ENCODE measurements at regions of chrX and their contacts with region 1.

Region 1: DNA sequence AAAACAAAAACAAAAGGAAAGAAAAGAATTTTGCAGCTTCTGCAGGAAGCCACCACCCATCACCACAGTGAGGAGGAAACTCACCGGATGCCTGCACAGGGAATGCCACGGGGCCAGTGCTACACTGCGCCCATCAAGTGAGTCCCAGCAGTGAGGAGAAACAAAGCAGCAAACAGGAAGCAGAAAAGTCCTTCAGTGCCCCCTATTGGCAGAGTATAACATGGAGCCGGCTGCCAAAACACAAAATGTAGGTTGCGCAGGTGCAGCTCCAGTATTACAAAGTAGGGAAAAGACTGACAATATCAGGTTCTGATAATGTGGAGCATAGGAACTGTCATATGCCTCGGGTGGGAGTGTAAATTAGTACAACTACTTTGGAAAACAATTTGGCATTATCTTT is 23.3 kb upstream of the SCML2 start:
- DNase-seq: peak; percentile 47
- H3K4me3 ChIP-seq: no peak overlapping the region
- H3K27ac ChIP-seq: no peak overlapping the region
- H3K4me1 ChIP-seq: no peaks in the 10 kb centered on the region
- CTCF ChIP-seq: peak; percentile 72

Region 2: GRCh38 chrX:17788439-17788838 is 589.4 kb before region 1 on chrX:
- CTCF ChIA-PET with region 1: no interaction called
- POLR2A ChIA-PET with region 1: no interaction called
- intact Hi-C with region 1: loop called (anchors 5 kb)
- DNase-seq: peak; percentile 14
- H3K4me3 ChIP-seq: no peak overlapping the region
- H3K27ac ChIP-seq: no peak overlapping the region
- H3K4me1 ChIP-seq: no peaks in the 10 kb centered on the region
- CTCF ChIP-seq: peak; percentile 80

Region 3: DNA sequence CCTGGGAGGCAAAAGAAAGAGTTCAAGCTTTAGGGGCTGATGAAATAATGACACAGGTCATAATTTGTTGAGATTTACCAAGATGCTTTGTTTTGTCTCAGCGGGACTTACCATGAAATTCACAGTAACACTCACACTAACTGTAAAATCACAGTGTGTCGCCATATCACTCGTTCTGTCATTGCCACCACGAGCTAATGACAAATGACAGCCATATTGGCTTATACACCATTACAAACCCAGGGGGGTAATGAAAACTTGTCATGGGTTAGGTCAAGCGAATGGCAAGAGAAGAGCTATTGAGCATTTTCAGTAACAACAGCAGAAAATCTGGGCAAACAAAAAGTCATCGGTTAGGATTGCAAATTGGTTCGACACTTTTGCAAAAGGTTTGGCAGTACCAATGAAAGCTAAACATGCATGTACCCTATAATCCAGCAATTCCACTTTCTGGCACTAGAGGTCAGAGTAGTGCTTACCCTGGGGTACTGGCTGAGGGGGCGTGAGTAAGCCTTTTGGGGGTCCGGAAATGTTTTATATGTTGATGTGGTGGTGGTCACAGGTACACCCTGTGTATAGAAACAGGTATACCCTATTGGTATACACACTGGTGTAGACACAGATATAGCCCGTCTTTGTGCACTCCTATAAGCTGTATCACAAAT is 432.8 kb before region 1 on chrX:
- CTCF ChIA-PET with region 1: no interaction called
- POLR2A ChIA-PET with region 1: no interaction called
- intact Hi-C with region 1: loop called (anchors 2 kb)
- DNase-seq: peak; percentile 32
- H3K4me3 ChIP-seq: no peak overlapping the region
- H3K27ac ChIP-seq: no peak overlapping the region
- H3K4me1 ChIP-seq: no peaks in the 10 kb centered on the region
- CTCF ChIP-seq: peak; percentile 76